ENCODE measurements at regions of chr2 and their contacts with region 1.

Region 1: DNA sequence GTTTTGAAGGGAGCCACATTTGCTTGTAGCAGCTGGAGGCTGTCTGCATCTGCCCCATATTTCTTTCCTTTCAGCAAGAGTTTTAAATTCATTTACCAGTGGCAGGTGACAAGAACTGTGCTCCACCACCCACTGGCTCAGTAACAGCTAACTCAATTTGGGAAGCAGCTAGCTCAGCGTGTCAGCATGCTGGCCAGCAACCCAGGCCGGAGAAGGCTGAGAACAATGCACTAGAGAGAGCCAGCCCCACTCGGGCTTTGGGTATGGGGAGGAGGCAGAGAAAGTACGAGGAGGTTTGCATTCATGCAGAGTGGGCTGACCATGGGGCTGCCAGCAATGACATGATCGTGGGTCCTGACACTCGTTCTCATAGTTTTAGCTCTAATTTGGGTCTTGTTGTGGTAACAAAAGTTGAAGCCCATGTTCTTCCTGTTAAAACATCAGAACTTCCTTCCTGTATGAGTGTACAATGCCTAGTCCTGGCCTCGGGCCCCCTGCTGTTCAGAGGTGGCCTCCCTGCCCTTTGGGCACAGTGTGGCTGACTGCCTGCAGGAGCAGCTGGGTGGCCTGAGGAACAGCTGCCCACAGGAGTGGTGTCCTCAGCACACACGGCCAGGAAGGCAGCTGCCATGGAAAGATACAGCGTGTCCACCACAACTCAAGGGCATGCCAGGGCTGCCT is 23.0 kb downstream of the CDC42EP3 start:
- DNase-seq: peak; percentile 68
- ATAC-seq: peak; percentile 78
- H3K4me3 Mint-ChIP-seq: no peak overlapping the region
- H3K27ac Mint-ChIP-seq: peak overlapping the region; percentile 93
- H3K4me1 Mint-ChIP-seq: peaks cover 86% of the 10 kb centered on the region
- H3K27me3 Mint-ChIP-seq: no peaks in the 10 kb centered on the region
- CTCF ChIP-seq: peak; percentile 32

Region 2: GRCh38 chr2:37436323-37436722 is 212.1 kb before region 1 on chr2:
- CTCF ChIA-PET with region 1: no interaction called
- POLR2A ChIA-PET with region 1: no interaction called
- intact Hi-C with region 1: no loop called
- DNase-seq: no peak
- ATAC-seq: no peak
- H3K4me3 Mint-ChIP-seq: no peak overlapping the region
- H3K27ac Mint-ChIP-seq: no peak overlapping the region
- H3K4me1 Mint-ChIP-seq: no peaks in the 10 kb centered on the region
- H3K27me3 Mint-ChIP-seq: no peaks in the 10 kb centered on the region
- CTCF ChIP-seq: no peak

Region 3: GRCh38 chr2:37672104-37672869 is 23.8 kb after region 1 on chr2:
- CTCF ChIA-PET with region 1: interaction called, 4 read pairs
- POLR2A ChIA-PET with region 1: interaction called, 10 read pairs
- intact Hi-C with region 1: no loop called
- DNase-seq: peak; percentile 80
- ATAC-seq: peak; percentile 49
- H3K4me3 Mint-ChIP-seq: peak overlapping the region; percentile 84
- H3K27ac Mint-ChIP-seq: peak overlapping the region; percentile 88
- H3K4me1 Mint-ChIP-seq: peaks cover 39% of the 10 kb centered on the region
- H3K27me3 Mint-ChIP-seq: no peaks in the 10 kb centered on the region
- CTCF ChIP-seq: no peak

Measured in activated CD8-positive, alpha-beta T cell treated with anti-CD3 and anti-CD28 coated beads for 36 hours (primary cell).